Naive thymus-derived CD4-positive, alpha-beta T cell (primary cell): ENCODE measurements at regions of chr15 and their contacts with region 1.

Region 1: DNA sequence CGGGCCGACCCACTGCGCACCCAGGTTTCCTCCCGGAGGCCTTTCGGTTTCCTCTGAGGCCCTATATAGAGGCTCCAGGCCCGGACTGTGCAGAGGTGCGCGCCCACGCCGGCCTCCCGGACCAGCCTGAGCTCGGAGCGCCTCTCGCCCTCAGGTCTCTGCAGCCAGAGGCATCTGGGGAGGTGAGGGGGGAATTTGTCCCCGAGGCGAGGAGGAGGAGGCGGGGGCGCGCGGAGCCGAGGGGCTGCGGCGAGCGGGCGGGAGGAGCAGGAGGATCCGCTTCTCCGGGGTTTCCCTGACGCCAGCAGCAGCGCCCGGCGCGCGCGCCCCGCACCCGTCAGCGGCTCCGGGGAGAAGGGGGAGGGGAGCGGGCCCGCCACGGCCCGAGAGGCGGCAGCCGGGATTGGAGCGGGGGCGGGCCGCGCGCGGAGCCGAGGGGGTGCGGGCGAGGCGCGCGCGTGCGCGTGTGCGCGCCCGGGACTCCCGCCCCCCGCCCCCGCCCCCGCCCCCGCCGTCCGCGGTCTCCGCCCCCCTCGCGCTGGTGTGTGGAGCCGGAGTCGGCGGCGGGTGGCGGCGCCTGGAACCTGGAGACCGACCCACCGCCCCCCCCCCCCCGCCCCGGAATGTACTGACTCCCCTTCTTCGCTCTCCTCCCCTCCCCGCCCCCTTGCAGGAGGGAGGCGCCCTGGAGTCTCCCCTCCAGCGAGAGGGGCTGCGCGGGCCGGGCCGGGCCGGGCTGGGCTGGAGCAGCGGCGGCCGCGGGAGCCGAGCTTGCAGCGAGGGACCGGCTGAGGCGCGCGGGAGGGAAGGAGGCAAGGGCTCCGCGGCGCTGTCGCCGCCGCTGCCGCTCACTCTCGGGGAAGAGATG is at the start of gene NEO1:
- DNase-seq: peak; percentile 71 to 86 (median 84)
- ATAC-seq: peak; percentile 90
- H3K4me3 ChIP-seq: peak within 1 kb of the TSS; percentile 74
- H3K4me3 Mint-ChIP-seq: peak within 1 kb of the TSS; percentile 81 to 95 (median 88)
- H3K27ac ChIP-seq: peak within 1 kb of the TSS; percentile 74
- H3K27ac Mint-ChIP-seq: peak within 1 kb of the TSS; percentile 36 to 88 (median 62)
- H3K4me1 ChIP-seq: peaks cover 8 to 11% of the 10 kb centered on the region in 2 donors
- H3K4me1 Mint-ChIP-seq: peaks cover 4 to 14% (median 11%) of the 10 kb centered on the region in 7 donors
- H3K27me3 ChIP-seq: no peaks in the 10 kb centered on the region
- H3K27me3 Mint-ChIP-seq: peaks cover 0 to 37% (median 0%) of the 10 kb centered on the region in 5 donors
- total RNA-seq, gene NEO1: 4.4 to 9.5 (median 6.9) TPM

Region 2: GRCh38 chr15:73081321-73081958 is 29.4 kb after region 1 on chr15:
- CTCF ChIA-PET with region 1: interaction called, 3 read pairs
- POLR2A ChIA-PET with region 1: interaction called, 3 read pairs
- intact Hi-C with region 1: loop called in 1 of 2 experiments (anchors 1 kb)
- DNase-seq: peak in 7 of 9 donors; percentile 16 to 56 (median 38)
- ATAC-seq: peak; percentile 63
- H3K4me3 ChIP-seq: no peak overlapping the region
- H3K4me3 Mint-ChIP-seq: no peak overlapping the region
- H3K27ac ChIP-seq: no peak overlapping the region
- H3K27ac Mint-ChIP-seq: no peak overlapping the region
- H3K4me1 ChIP-seq: no peaks in the 10 kb centered on the region
- H3K4me1 Mint-ChIP-seq: peaks cover 0 to 3% (median 0%) of the 10 kb centered on the region in 7 donors
- H3K27me3 ChIP-seq: no peaks in the 10 kb centered on the region
- H3K27me3 Mint-ChIP-seq: peaks cover 0 to 7% (median 0%) of the 10 kb centered on the region in 5 donors

Region 3: GRCh38 chr15:73265536-73266153 is 213.6 kb after region 1 on chr15:
- CTCF ChIA-PET with region 1: no interaction called
- POLR2A ChIA-PET with region 1: no interaction called
- intact Hi-C with region 1: loop called in 1 of 2 experiments (anchors 5 kb)
- DNase-seq: peak in 8 of 9 donors; percentile 8 to 46 (median 35)
- ATAC-seq: peak; percentile 73
- H3K4me3 ChIP-seq: no peak overlapping the region
- H3K4me3 Mint-ChIP-seq: no peak overlapping the region
- H3K27ac ChIP-seq: no peak overlapping the region
- H3K27ac Mint-ChIP-seq: peak overlapping the region in 1 of 9 donors; percentile 1
- H3K4me1 ChIP-seq: no peaks in the 10 kb centered on the region
- H3K4me1 Mint-ChIP-seq: peaks cover 0 to 4% (median 0%) of the 10 kb centered on the region in 7 donors
- H3K27me3 ChIP-seq: no peaks in the 10 kb centered on the region
- H3K27me3 Mint-ChIP-seq: no peaks in the 10 kb centered on the region